Dorsolateral prefrontal cortex (tissue), 120 donors: ENCODE measurements at regions of chr1 and their contacts with region 1.

Region 1: GRCh38 chr1:110495926-110496600 is 22.9 kb downstream of the KCNA10 start:
- DNase-seq: peak; percentile 56 to 92 (median 78)
- H3K4me3 ChIP-seq: no peak overlapping the region
- H3K27ac ChIP-seq: no peak overlapping the region
- H3K27me3 ChIP-seq: no peaks in the 10 kb centered on the region
- CTCF ChIP-seq: peak; percentile 66 to 97 (median 89)

Region 2: DNA sequence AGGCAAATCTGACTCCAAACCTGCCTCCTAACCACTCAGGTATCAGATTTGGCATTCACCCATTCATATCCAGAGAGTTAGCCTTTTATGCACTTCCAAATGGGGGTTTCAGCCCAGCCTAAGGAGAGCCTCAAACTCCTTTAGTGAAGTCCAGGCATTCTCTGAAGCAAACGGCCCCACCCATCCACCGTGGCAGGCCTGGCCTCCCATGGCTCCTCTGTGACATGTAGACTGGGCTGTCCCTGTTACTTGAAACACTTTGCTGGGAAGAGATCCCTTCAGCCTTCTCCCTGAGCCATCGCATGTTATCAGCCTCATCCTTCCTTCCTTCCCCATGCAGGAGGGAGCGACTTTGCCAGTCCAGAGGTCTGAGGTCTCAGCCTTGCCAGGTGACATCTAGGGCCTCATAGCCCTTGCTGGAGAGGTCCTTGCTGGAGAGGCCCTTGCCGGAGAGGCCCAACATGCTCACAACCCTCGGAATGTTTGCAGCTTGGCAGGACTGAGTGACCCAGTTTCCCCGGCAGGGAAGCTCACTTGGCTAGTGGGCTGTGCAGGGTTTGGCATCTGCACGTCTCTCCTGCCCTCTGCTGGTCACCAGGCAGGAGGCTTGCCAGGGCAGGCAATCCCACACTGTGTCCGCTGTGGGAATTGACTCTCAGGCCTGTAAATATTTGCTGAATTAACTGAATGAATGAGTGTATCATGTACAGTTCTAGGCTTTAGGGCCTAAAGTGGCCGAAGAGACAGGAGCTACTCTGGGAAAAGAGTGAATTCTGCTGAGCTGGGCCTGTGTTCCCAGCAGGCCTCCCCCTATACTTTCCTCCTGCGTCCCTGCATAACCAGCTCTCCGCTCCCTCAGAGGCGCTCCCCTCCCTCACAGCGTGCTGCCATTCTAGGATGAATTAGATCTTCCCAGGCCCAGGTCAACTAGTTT is 183.6 kb before region 1 on chr1:
- intact Hi-C with region 1: loop called in 1 of 2 experiments (anchors 10 kb)
- DNase-seq: peak; percentile 63 to 95 (median 84)
- H3K4me3 ChIP-seq: peak overlapping the region in 4 of 59 donors; percentile 4 to 21 (median 14)
- H3K27ac ChIP-seq: peak overlapping the region in 22 of 59 donors; percentile 3 to 83 (median 53)
- H3K27me3 ChIP-seq: no peaks in the 10 kb centered on the region
- CTCF ChIP-seq: peak; percentile 71 to 100 (median 96)

Region 3: GRCh38 chr1:110412576-110412975 is 83.5 kb before region 1 on chr1:
- intact Hi-C with region 1: loop called in 1 of 2 experiments (anchors 2 kb)
- DNase-seq: peak; percentile 41 to 76 (median 57)
- H3K4me3 ChIP-seq: no peak overlapping the region
- H3K27ac ChIP-seq: no peak overlapping the region
- H3K27me3 ChIP-seq: no peaks in the 10 kb centered on the region
- CTCF ChIP-seq: peak; percentile 42 to 85 (median 73)